ENCODE measurements at regions of chr11 and their contacts with region 1.

Region 1: DNA sequence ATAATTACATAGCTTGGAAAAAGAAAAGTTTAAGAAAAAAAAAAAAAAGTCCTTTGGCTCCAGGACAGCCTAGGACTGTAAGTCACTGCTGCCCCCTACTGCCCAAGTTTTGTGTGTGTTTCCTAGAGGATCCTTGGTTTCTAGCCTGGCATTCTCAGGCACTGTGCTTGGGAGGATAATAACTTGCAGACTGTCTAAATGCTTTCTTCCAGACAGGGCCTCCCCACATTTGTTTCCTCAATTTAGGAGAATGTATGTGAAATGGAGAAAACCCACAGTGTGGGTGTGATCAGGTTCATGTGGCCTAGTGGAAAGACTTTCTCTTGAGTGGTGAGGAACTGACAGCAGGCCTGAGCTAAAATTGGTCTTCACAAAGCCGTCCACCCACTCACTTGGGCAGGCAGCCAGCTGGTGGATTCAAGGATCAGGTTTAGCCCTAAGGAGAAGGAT is 191.0 kb downstream of the NAV2 start:
- DNase-seq: peak; percentile 72 to 86 (median 80)
- H3K4me3 ChIP-seq: no peak overlapping the region
- H3K27ac ChIP-seq: no peak overlapping the region
- H3K4me1 ChIP-seq: peaks cover 6% of the 10 kb centered on the region
- H3K27me3 ChIP-seq: no peaks in the 10 kb centered on the region
- CTCF ChIP-seq: peak in 2 of 3 donors; percentile 47 to 76
- EP300 ChIP-seq: no peak
- POLR2A ChIP-seq: no peak

Region 2: DNA sequence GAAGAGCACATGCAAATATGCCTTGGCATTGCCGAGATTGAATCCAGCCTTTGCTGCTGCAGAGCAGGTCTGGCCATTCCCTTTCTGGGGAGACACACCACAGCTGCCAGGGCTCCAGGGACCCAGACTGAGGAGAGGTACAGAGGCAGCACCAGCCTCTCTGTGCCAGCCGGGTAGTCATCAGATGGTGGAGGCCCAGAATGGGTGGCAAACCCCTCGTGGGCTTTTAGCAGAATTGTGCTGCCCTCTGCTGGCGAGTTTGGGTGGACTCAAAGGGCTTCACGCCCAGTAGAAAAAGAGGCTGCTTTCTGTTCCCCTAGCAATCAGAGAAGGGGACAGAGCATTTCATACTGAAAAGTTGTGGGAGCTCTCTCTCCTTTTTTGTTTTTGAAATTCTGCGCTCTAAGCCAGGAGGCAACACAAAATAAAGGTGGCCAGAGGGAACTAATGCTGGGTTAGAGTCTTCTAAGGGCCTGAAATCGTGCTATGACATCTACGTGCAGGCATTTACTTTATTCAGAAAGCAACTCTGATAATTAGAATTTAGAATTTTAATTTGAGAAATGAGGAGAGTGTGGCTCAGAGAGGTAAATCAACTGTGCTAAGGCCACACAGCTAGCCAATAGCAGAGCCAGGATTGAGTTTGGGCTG is 349.8 kb before region 1 on chr11:
- intact Hi-C with region 1: loop called in 1 of 4 experiments (anchors 5 kb)
- DNase-seq: peak; percentile 52 to 79 (median 74)
- H3K4me3 ChIP-seq: no peak overlapping the region
- H3K27ac ChIP-seq: no peak overlapping the region
- H3K4me1 ChIP-seq: no peaks in the 10 kb centered on the region
- H3K27me3 ChIP-seq: no peaks in the 10 kb centered on the region
- CTCF ChIP-seq: peak; percentile 51 to 61 (median 53)
- EP300 ChIP-seq: no peak
- POLR2A ChIP-seq: no peak

Region 3: GRCh38 chr11:19561011-19561410 is 342.6 kb before region 1 on chr11:
- intact Hi-C with region 1: loop called in 3 of 4 experiments (anchors 5 kb)
- DNase-seq: no peak
- H3K4me3 ChIP-seq: no peak overlapping the region
- H3K27ac ChIP-seq: no peak overlapping the region
- H3K4me1 ChIP-seq: no peaks in the 10 kb centered on the region
- H3K27me3 ChIP-seq: no peaks in the 10 kb centered on the region
- CTCF ChIP-seq: no peak
- EP300 ChIP-seq: no peak
- POLR2A ChIP-seq: no peak

Region 4: GRCh38 chr11:19951558-19952115 is 48.0 kb after region 1 on chr11:
- intact Hi-C with region 1: loop called in 1 of 4 experiments (anchors 10 kb)
- DNase-seq: no peak
- H3K4me3 ChIP-seq: no peak overlapping the region
- H3K27ac ChIP-seq: peak overlapping the region in 1 of 2 donors; percentile 36
- H3K4me1 ChIP-seq: peaks cover 4% of the 10 kb centered on the region
- H3K27me3 ChIP-seq: no peaks in the 10 kb centered on the region
- CTCF ChIP-seq: peak; percentile 18 to 73 (median 73)
- EP300 ChIP-seq: no peak
- POLR2A ChIP-seq: no peak

Region 5: DNA sequence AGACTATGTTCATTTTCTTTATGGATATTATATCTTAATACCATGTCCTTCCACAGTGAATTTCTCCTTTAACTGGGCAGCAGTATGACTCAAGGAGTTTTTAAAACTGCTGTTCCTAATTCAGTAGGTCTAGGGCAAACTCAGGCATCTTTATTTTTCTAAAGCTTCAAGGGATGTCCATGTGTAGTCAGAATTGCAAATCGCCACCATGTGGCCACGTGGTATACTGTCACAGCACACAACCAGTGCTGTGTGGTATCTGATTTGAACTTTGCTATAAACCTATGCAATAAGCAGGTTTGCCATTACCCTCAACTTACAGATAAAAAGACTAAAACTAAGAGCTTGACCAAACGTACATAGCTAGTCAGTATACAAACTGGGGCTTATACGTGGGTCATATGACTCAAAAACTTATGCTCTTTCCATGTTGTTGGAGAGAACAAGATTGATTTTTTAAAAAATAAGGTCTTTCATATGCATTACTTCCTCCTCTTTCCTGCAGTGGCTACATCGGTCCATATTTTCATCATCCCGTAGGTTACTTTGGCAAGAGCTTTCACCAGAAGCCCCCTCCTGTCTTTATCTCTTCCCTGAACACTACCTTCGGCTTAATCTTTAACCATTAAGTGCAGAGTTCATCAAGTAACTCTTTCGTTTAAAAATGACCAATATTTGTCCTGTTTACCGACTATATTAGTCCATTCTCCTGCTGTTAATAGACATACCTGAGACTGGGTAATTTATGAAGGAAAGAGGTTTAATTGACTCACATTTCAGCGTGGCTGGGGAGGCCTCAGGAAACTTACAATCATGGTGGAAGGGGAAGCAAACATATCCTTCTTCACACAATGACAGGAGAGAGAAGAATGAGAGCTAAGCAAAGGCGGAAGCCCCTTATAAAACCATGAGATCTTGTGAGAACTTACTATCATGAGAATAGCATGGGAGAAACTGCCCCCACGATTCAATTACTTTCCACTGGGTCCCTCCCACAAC is 451.9 kb after region 1 on chr11:
- intact Hi-C with region 1: loop called in 1 of 4 experiments (anchors 10 kb)
- DNase-seq: no peak
- H3K4me3 ChIP-seq: no peak overlapping the region
- H3K27ac ChIP-seq: no peak overlapping the region
- H3K4me1 ChIP-seq: no peaks in the 10 kb centered on the region
- H3K27me3 ChIP-seq: no peaks in the 10 kb centered on the region
- CTCF ChIP-seq: peak in 2 of 3 donors; percentile 9 to 15
- EP300 ChIP-seq: no peak
- POLR2A ChIP-seq: no peak

Measured in ovary (tissue), 10 donors.